ENCODE measurements at regions of chr2 and their contacts with region 1.

Region 1: DNA sequence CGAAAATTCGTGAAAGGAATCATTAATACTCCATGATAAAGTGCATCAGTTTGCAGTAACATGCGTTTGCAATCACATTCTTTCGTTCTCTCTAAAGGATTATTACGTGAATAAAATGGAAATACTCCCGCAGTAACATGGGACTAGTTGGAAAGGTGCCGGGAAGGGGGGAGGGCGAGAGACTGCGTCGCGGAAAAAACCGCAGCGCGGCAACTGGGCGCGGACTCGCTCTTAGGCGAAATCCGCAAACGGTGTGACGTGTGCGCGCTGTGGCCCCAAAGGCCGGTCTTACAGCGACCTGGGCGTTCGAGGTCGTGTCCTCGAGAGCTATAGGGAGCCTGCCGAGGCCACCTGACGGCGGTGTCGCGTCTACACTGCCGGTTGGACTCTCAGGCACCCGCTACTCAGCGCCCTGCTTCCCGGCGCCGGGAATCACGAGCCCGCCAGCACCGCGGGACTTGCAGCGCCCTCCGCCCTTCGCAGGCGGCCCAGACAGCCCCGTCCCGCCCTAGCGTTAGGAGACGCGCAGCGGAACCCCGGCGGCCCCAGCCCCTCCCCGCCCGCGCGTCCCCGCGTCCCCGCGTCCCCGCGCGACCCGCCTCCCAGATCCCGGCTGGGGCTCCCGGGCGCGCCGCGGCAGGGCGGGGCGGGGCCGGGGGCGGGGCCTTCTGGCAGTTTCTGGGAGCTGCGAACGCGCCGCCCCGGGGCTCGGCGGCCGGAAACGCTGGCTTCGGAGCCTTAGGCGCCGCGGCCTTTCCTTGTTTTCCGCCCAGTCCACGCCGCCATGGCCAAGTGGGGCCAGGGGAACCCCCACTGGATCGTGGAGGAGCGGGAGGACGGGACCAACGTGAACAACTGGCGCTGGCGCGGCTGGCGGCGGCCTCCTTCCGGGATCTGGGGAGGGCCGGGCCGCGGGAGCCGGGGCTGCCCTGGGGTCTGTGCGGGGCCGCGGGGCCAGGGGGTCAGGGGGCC is 15.1 kb downstream of the C2orf74 start:
- DNase-seq: peak; percentile 92
- H3K4me3 Mint-ChIP-seq: peak overlapping the region; percentile 90
- H3K27ac Mint-ChIP-seq: peak overlapping the region; percentile 87
- H3K4me1 Mint-ChIP-seq: peaks cover 48% of the 10 kb centered on the region
- H3K27me3 Mint-ChIP-seq: peaks cover 10% of the 10 kb centered on the region

Region 2: DNA sequence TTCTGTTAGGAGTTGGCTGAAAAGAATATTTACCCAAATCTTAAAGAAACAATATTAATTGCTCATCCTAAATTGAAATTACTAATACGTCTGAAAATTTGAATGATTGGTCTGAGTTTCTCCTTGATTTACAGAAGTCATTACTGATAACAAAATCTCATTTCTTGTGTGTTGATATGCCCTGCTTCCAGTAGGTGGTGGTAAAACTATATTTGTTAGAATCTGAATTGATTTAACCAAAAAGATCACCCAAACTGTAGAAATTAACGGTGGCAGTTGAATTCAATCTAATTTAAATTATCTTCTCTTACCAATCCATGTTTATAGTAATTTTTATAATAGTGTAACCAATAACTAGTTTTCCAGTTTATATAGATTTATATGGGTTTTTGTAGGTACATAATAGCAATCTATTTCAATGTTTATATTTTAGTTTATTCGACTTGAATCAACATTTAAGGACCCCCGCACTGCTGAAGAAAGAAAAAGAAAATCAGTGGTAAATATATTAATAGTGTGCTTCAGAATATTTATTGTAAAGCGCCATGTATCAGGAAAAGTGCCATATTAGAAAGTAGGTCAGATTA is 382.7 kb before region 1 on chr2:
- intact Hi-C with region 1: loop called (anchors 10 kb)
- DNase-seq: no peak
- H3K4me3 Mint-ChIP-seq: no peak overlapping the region
- H3K27ac Mint-ChIP-seq: no peak overlapping the region
- H3K4me1 Mint-ChIP-seq: peaks cover 16% of the 10 kb centered on the region
- H3K27me3 Mint-ChIP-seq: no peaks in the 10 kb centered on the region

Region 3: GRCh38 chr2:61144697-61145268 is 32.3 kb before region 1 on chr2:
- intact Hi-C with region 1: loop called (anchors 1 kb)
- DNase-seq: peak; percentile 92
- H3K4me3 Mint-ChIP-seq: peak overlapping the region; percentile 94
- H3K27ac Mint-ChIP-seq: peak overlapping the region; percentile 94
- H3K4me1 Mint-ChIP-seq: peaks cover 5% of the 10 kb centered on the region
- H3K27me3 Mint-ChIP-seq: no peaks in the 10 kb centered on the region

Region 4: GRCh38 chr2:61694312-61695274 is 517.6 kb after region 1 on chr2:
- intact Hi-C with region 1: loop called (anchors 10 kb)
- DNase-seq: peak; percentile 80
- H3K4me3 Mint-ChIP-seq: peak overlapping the region; percentile 89
- H3K27ac Mint-ChIP-seq: peak overlapping the region; percentile 76
- H3K4me1 Mint-ChIP-seq: peaks cover 14% of the 10 kb centered on the region
- H3K27me3 Mint-ChIP-seq: peaks cover 2% of the 10 kb centered on the region

Measured in activated T-helper 1 cell treated with anti-CD3 and anti-CD28 coated beads, Interleukin-12 subunit alpha, Interleukin-12 subunit beta, Interleukin-2, Interleukin-4 antibody, amounts not matched to agents 30 ng/mL and 10 ng/mL and 1 ng/mL, durations not matched to agents 14 hours and 24 hours and 36 hours (primary cell).